ENCODE measurements at regions of chr4 and their contacts with region 1.

Region 1: GRCh38 chr4:154818230-154818629 is 37.2 kb downstream of the RBM46 start:
- DNase-seq: no peak
- H3K4me3 ChIP-seq: no peak overlapping the region
- H3K27ac ChIP-seq: no peak overlapping the region
- H3K4me1 ChIP-seq: peaks cover 4% of the 10 kb centered on the region
- H3K27me3 ChIP-seq: no peaks in the 10 kb centered on the region
- CTCF ChIP-seq: no peak

Region 2: DNA sequence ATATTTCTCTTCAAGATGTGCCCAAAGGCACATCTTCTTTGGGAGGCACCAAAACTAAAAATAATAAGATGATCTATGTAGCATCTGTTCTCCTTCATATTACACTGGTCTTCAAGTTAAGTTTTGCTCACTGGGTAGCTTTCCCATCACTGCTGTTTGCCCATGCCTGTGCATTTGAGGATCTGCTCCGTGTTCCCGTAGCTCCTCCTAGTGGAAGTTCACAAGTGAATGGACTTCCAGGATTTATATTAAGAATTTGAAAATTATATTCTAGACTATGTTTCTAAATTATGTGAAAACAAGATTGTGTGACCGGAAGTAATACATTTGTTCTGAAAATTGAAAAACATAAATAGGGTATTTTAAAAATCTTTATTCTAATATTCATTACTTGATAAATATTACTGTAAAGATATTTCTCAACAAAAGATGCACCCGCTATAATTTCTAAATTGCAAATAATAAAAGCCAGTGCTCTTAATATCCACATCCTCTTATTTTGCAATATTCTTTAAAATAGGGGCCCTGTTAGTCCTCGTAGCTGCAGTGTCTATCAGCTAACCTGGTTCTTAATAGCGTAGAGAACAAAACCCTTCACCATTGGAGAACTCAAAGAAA is 110.5 kb after region 1 on chr4:
- CTCF ChIA-PET with region 1: no interaction called
- dilution Hi-C with region 1: no loop called
- in situ Hi-C with region 1: loop called (anchors 10 to 25 kb)
- intact Hi-C with region 1: no loop called
- DNase-seq: peak; percentile 23
- H3K4me3 ChIP-seq: no peak overlapping the region
- H3K27ac ChIP-seq: no peak overlapping the region
- H3K4me1 ChIP-seq: no peaks in the 10 kb centered on the region
- H3K27me3 ChIP-seq: no peaks in the 10 kb centered on the region
- CTCF ChIP-seq: peak; percentile 41 to 76